Ovary (tissue), 10 donors: ENCODE measurements at regions of chr10 and their contacts with region 1.

Region 1: GRCh38 chr10:110717781-110718589 is 73.8 kb downstream of the RBM20 start:
- DNase-seq: no peak
- H3K4me3 ChIP-seq: no peak overlapping the region
- H3K27ac ChIP-seq: no peak overlapping the region
- H3K4me1 ChIP-seq: no peaks in the 10 kb centered on the region
- H3K27me3 ChIP-seq: no peaks in the 10 kb centered on the region
- CTCF ChIP-seq: no peak
- EP300 ChIP-seq: no peak
- POLR2A ChIP-seq: no peak

Region 2: GRCh38 chr10:110706690-110707098 is 11.3 kb before region 1 on chr10:
- intact Hi-C with region 1: no loop called
- DNase-seq: no peak
- H3K4me3 ChIP-seq: no peak overlapping the region
- H3K27ac ChIP-seq: no peak overlapping the region
- H3K4me1 ChIP-seq: no peaks in the 10 kb centered on the region
- H3K27me3 ChIP-seq: no peaks in the 10 kb centered on the region
- CTCF ChIP-seq: no peak
- EP300 ChIP-seq: no peak
- POLR2A ChIP-seq: no peak

Region 3: GRCh38 chr10:111709603-111710002 is 991.6 kb after region 1 on chr10:
- intact Hi-C with region 1: loop called in 1 of 4 experiments (anchors 10 kb)
- DNase-seq: no peak
- H3K4me3 ChIP-seq: no peak overlapping the region
- H3K27ac ChIP-seq: no peak overlapping the region
- H3K4me1 ChIP-seq: no peaks in the 10 kb centered on the region
- H3K27me3 ChIP-seq: no peaks in the 10 kb centered on the region
- CTCF ChIP-seq: no peak
- EP300 ChIP-seq: no peak
- POLR2A ChIP-seq: no peak